A673 (cell line): ENCODE measurements at regions of chr3 and their contacts with region 1.

Region 1: DNA sequence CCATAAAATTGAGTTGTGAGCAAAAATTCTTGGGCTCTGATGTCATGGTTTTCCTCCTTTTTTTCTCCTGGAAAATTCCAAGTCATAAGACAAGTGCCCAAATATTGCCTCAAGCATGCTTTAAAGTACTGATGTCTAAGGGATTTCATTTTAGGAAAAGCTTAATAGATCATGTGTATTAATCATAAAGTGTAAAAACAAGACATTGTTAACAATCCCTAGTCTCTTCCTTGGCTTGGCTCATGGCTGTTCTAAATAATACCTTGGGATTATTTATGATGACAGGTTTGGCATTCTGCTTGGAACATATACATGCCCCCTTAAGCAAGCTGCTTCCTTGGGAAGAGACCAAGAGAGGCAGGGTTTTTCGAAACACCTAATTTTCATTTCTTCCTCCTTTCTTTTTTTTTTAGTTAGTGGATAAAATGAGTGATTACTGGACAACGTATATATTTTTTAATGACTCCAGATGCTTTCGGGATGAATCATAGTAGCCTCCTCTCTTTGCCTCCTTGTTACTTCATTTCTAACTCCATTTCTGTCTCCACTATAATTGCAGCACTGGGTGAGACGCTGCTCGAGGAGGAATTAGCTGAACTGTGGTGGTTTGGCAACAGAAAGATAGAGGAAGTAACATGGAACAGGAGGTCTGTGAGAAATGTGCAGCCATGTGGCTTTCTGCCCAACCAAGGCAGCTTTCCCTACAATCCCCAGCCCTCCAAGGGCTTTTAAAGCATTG is 104.9 kb downstream of the TPRG1 start:
- DNase-seq: peak; percentile 85
- H3K4me3 ChIP-seq: no peak overlapping the region
- H3K27ac ChIP-seq: peak overlapping the region; percentile 83
- H3K4me1 ChIP-seq: peaks cover 66% of the 10 kb centered on the region
- H3K27me3 ChIP-seq: no peaks in the 10 kb centered on the region
- CTCF ChIP-seq: no peak

Region 2: GRCh38 chr3:189292667-189293478 is 16.2 kb after region 1 on chr3:
- CTCF ChIA-PET with region 1: no interaction called
- POLR2A ChIA-PET with region 1: interaction called, 11 read pairs
- intact Hi-C with region 1: loop called (anchors 2 kb)
- DNase-seq: peak; percentile 95
- H3K4me3 ChIP-seq: no peak overlapping the region
- H3K27ac ChIP-seq: peak overlapping the region; percentile 81
- H3K4me1 ChIP-seq: peaks cover 37% of the 10 kb centered on the region
- H3K27me3 ChIP-seq: no peaks in the 10 kb centered on the region
- CTCF ChIP-seq: no peak